ENCODE measurements at regions of chr12 and their contacts with region 1.

Region 1: GRCh38 chr12:91577586-91578539 is 395.2 kb upstream of the DCN start:
- DNase-seq: peak; percentile 16
- H3K4me3 ChIP-seq: peak overlapping the region; percentile 29 to 38; a peak in 2 of 4 replicates
- H3K27ac ChIP-seq: peak overlapping the region; percentile 8 to 99; a peak in 3 of 4 replicates
- H3K4me1 ChIP-seq: peaks cover 9 to 23% of the 10 kb centered on the region in 2 experiments; a peak in 3 of 4 replicates
- H3K27me3 ChIP-seq: no peaks in the 10 kb centered on the region
- CTCF ChIP-seq: peak; percentile 74
- EP300 ChIP-seq: no peak
- RAD21 ChIP-seq: peak; percentile 66

Region 2: DNA sequence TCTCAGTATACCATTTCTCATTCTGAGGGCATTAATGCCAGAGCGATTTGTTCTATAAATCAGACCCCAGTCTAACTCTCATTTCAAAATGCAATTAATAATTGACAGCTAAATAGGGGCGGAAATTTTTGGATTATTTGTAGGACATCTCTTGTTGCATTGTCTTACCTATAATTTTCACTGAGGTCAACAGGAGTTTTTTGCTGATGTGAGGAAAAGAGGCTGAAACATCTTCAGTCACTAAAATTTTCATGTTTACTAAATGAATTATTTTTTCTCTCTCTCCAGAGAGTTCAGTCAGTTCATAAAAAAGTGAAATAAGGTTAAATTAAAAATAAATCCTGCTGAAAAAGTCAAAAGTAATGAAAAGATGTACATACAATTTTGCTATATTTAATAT is 918.8 kb before region 1 on chr12:
- CTCF ChIA-PET with region 1: no interaction called
- POLR2A ChIA-PET with region 1: no interaction called
- DNase-seq: no peak
- H3K4me3 ChIP-seq: no peak overlapping the region
- H3K27ac ChIP-seq: no peak overlapping the region
- H3K4me1 ChIP-seq: no peaks in the 10 kb centered on the region; a peak in 1 of 4 replicates
- H3K27me3 ChIP-seq: no peaks in the 10 kb centered on the region
- CTCF ChIP-seq: no peak
- EP300 ChIP-seq: no peak
- RAD21 ChIP-seq: no peak

Region 3: DNA sequence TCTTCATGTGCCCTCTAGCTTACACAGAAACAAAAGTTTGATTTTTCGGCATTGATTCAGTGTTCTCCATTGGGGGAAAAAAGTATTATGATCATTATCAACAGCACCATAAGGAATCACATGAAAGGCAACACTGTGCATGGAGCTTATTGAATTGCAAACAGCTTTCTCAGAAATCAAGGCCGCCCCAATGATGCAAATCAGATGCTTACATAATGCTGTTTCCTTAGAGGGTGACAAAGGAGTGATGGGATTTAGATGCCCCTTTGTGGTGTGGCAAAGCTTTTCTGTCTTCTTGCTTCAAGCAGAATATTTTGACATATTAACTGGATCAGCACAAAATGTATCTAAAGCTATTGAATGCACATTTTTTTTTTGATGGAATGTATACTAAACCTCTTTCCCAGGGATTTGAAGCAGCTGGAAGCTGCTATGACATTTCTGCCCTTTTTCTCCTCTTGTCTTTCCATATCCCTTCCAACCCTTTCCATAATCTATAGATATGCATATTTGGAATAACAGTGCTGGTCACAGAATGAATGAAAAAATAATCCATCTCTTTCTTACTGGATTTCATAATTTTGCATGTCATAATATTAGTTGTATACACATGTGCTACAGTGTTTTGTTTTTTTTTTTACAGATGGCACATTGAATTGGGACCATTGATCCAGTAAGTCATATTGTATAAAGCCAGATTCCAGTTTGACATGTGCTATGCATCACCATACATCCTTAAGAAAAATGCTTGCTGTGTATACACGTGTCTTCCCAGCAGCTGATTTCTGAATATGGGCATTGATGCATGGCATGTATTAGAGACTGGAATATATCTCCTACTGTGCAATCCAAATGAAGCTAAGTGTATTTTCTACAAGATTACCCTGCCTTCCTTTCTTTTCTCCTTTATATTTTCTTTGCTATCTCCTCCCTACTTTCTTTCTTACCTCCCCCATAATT is 135.6 kb before region 1 on chr12:
- CTCF ChIA-PET with region 1: no interaction called
- POLR2A ChIA-PET with region 1: no interaction called
- DNase-seq: no peak
- H3K4me3 ChIP-seq: no peak overlapping the region
- H3K27ac ChIP-seq: no peak overlapping the region
- H3K4me1 ChIP-seq: no peaks in the 10 kb centered on the region
- H3K27me3 ChIP-seq: no peaks in the 10 kb centered on the region
- CTCF ChIP-seq: no peak
- EP300 ChIP-seq: no peak
- RAD21 ChIP-seq: no peak

Region 4: GRCh38 chr12:91556909-91557308 is 21.0 kb before region 1 on chr12:
- CTCF ChIA-PET with region 1: interaction called, 15 read pairs
- POLR2A ChIA-PET with region 1: no interaction called
- DNase-seq: no peak
- H3K4me3 ChIP-seq: no peak overlapping the region
- H3K27ac ChIP-seq: peak overlapping the region in 1 of 2 experiments; percentile 92; a peak in 2 of 4 replicates
- H3K4me1 ChIP-seq: peaks cover 0 to 16% of the 10 kb centered on the region in 2 experiments; a peak in 2 of 4 replicates
- H3K27me3 ChIP-seq: no peaks in the 10 kb centered on the region
- CTCF ChIP-seq: no peak
- EP300 ChIP-seq: no peak
- RAD21 ChIP-seq: no peak

Region 5: GRCh38 chr12:91561958-91562875 is 15.6 kb before region 1 on chr12:
- CTCF ChIA-PET with region 1: interaction called, 15 read pairs
- POLR2A ChIA-PET with region 1: interaction called, 3 read pairs
- DNase-seq: no peak
- H3K4me3 ChIP-seq: peak overlapping the region in 1 of 2 experiments; percentile 36; a peak in 1 of 4 replicates
- H3K27ac ChIP-seq: no peak overlapping the region
- H3K4me1 ChIP-seq: peaks cover 0 to 2% of the 10 kb centered on the region in 2 experiments; a peak in 1 of 4 replicates
- H3K27me3 ChIP-seq: no peaks in the 10 kb centered on the region
- CTCF ChIP-seq: no peak
- EP300 ChIP-seq: no peak
- RAD21 ChIP-seq: no peak

Region 6: DNA sequence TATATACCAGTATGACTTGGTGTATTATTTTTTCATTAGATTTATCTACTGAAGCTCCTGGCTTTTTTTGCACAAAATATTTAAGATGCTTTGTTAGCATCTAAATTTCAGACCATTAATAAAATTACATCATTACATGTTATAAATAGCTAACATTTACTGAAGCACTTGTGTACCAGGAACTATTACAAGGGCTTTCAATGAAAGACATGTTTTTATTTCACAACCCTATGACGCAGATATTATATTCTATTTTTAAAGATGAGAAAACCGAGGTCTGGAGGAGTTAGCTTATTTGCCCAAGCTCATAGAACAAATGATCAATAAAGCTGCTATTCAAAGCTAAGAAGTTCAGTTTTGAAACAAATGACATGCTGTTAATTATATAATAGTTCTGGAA is 25.2 kb after region 1 on chr12:
- CTCF ChIA-PET with region 1: no interaction called
- POLR2A ChIA-PET with region 1: no interaction called
- DNase-seq: no peak
- H3K4me3 ChIP-seq: no peak overlapping the region
- H3K27ac ChIP-seq: no peak overlapping the region
- H3K4me1 ChIP-seq: no peaks in the 10 kb centered on the region; a peak in 1 of 4 replicates
- H3K27me3 ChIP-seq: no peaks in the 10 kb centered on the region
- CTCF ChIP-seq: no peak
- EP300 ChIP-seq: no peak
- RAD21 ChIP-seq: no peak